Activated naive CD4-positive, alpha-beta T cell treated with anti-CD3 and anti-CD28 coated beads for 36 hours (primary cell): ENCODE measurements at regions of chr22 and their contacts with region 1.

Region 1: GRCh38 chr22:38398609-38399461 is 56.2 kb downstream of the KCNJ4 start:
- DNase-seq: peak; percentile 84
- H3K4me3 Mint-ChIP-seq: peak overlapping the region; percentile 72
- H3K27ac Mint-ChIP-seq: peak overlapping the region; percentile 50
- H3K4me1 Mint-ChIP-seq: peaks cover 25% of the 10 kb centered on the region
- H3K27me3 Mint-ChIP-seq: no peaks in the 10 kb centered on the region

Region 2: GRCh38 chr22:38181453-38182247 is 217.2 kb before region 1 on chr22 and contains the start of gene PLA2G6:
- CTCF ChIA-PET with region 1: no interaction called
- intact Hi-C with region 1: loop called (anchors 5 kb)
- DNase-seq: peak; percentile 99
- H3K4me3 Mint-ChIP-seq: peak within 1 kb of the TSS; percentile 94
- H3K27ac Mint-ChIP-seq: peak within 1 kb of the TSS; percentile 96
- H3K4me1 Mint-ChIP-seq: peaks cover 43% of the 10 kb centered on the region
- H3K27me3 Mint-ChIP-seq: no peaks in the 10 kb centered on the region
- total RNA-seq, gene PLA2G6: 80.2 to 85.3 TPM

Region 3: GRCh38 chr22:38317122-38317994 is 81.5 kb before region 1 on chr22 and contains the start of gene CSNK1E:
- CTCF ChIA-PET with region 1: no interaction called
- intact Hi-C with region 1: loop called (anchors 2 kb)
- DNase-seq: peak; percentile 73
- H3K4me3 Mint-ChIP-seq: peak within 1 kb of the TSS; percentile 90
- H3K27ac Mint-ChIP-seq: peak within 1 kb of the TSS; percentile 86
- H3K4me1 Mint-ChIP-seq: peaks cover 41% of the 10 kb centered on the region
- H3K27me3 Mint-ChIP-seq: no peaks in the 10 kb centered on the region
- total RNA-seq, gene CSNK1E: 105 to 108 TPM

Region 4: DNA sequence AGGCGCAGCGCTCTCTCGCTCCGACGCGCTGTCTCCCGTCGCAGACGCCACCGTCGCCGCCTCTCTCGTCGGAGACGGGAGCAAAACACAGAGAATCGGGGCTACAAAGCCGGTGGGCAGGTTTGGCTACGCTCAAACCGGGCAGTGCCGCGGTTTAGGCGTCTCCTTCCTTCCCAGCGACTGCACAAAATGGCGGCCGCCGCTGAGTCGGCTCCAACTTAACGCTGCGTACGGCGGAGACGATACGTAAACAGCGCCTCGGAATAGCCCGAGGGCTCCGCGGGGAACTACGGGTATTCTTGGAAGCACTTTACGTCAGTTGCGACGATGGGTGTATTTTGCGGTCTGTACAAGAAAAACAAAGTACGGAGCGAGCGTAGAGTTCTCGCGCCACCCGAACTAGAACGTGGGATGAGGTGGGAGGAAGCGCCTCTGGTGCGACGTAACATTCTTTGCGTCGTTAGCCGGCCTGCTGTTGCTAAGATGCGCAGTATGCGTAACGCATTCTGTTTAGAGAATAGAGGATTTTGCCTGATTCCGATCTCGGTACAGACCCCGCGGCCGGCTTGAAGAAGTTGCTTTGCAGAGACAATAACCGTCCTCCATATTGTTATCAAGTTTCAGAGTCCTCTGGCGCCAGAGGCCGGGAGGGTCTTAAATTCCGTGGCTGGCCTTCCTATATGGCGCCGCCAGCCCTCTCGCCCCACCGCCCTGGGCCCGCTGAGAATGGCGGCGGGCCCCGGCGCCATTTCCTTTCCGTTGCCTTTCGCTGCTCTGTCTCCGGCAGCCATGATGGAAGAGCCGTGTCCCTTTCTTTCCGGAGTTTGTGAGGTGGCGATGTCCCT is 107.5 kb after region 1 on chr22 and contains the start of gene DDX17:
- CTCF ChIA-PET with region 1: no interaction called
- intact Hi-C with region 1: loop called (anchors 5 kb)
- DNase-seq: peak; percentile 97
- H3K4me3 Mint-ChIP-seq: peak within 1 kb of the TSS; percentile 98
- H3K27ac Mint-ChIP-seq: peak within 1 kb of the TSS; percentile 100
- H3K4me1 Mint-ChIP-seq: peaks cover 36% of the 10 kb centered on the region
- H3K27me3 Mint-ChIP-seq: no peaks in the 10 kb centered on the region
- total RNA-seq, gene DDX17: 319 to 341 TPM

Region 5: DNA sequence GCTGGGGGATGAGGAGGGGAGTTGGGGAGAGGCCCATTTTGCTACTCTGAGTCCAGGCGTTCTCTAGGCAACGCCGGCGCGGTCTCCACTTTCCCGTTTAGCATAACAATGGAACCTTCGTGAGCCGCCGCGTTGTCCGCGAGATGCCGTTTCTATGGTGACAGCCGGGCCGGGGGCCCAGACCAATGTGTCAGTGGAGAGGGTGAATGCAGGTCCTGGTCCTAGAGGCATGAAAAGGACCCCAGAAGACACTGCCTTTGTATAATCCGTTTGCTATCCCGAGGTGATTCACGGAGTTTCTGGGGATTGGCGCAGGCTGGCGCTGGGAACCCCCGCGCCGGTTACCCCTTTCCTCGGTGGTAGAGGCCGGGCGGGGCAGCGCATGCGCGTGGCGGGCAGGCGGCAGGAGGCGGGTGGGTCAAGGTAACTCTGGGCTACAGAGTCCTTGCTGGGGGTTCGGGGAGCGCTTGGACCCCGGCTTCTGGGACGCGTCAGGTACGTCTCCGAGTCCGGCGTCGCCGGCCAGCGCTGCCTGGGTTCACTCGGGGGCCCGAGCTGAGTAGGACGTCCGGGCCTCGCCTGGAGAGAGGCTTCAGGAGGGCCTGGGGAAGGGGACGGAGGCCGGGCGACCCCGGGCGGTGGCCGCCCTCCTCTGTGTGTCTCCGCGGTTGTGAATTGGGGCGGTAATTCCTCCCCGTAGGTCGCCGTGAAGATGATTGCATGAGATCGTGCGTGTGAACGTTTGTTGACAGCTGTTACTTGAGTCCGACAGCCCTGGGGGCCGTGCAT is 257.6 kb after region 1 on chr22 and contains the starts of genes CBY1 and FAM227A:
- CTCF ChIA-PET with region 1: no interaction called
- intact Hi-C with region 1: loop called (anchors 1 kb)
- DNase-seq: peak; percentile 86
- H3K4me3 Mint-ChIP-seq: peak within 1 kb of the TSS; percentile 87
- H3K27ac Mint-ChIP-seq: peak within 1 kb of the TSS; percentile 95
- H3K4me1 Mint-ChIP-seq: peaks cover 14% of the 10 kb centered on the region
- H3K27me3 Mint-ChIP-seq: no peaks in the 10 kb centered on the region
- total RNA-seq, gene CBY1: 8.8 to 9.4 TPM
- total RNA-seq, gene FAM227A: 0.35 to 0.36 TPM